Activated T-helper 1 cell treated with anti-CD3 and anti-CD28 coated beads, Interleukin-12 subunit alpha, Interleukin-12 subunit beta, Interleukin-2, Interleukin-4 antibody, amounts not matched to agents 30 ng/mL and 10 ng/mL and 1 ng/mL, durations not matched to agents 14 hours and 24 hours and 36 hours (primary cell): ENCODE measurements at regions of chr15 and their contacts with region 1.

Region 1: DNA sequence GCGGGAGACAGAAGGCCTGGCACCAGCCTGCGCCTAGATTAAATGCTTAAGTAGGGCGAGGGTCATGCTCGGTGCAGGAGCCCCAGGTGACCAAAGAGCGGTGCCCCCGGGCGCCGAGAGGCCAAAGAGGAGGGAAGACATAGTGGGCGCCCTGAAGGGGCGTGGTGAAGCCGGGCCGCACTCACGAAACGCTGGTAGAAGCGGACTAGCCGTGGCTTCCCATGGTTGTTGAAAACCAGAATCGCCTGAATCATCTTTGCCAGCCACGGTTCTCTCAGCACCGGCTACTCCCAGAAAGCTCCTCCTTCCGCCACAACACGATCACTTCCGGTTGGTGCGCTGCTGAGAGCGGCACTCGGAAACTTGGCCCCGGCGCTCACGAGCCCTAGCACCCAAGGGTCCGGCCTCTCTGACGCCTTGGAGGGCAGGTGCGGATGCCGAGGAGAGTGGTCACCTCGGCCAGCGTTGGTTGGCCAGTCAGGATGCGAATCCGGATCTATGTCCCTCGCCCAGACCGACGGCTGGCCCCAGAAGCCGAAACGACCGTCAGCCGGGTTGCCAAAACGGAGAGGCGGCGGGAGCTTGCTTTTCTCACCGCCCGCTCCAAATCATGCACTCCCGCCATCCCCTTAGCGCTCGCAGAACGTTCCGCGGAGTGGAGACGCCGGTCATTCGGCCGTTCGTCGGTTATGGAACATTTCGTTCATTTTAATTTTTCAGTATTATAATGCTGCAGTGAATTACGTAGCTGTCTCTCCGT is at the start of gene AP3S2:
- DNase-seq: peak; percentile 87
- H3K4me3 Mint-ChIP-seq: peak within 1 kb of the TSS; percentile 97
- H3K27ac Mint-ChIP-seq: peak within 1 kb of the TSS; percentile 94
- H3K4me1 Mint-ChIP-seq: peaks cover 36% of the 10 kb centered on the region
- H3K27me3 Mint-ChIP-seq: no peaks in the 10 kb centered on the region
- total RNA-seq, gene AP3S2: 21.4 and 24.7 TPM in 2 replicates

Region 2: DNA sequence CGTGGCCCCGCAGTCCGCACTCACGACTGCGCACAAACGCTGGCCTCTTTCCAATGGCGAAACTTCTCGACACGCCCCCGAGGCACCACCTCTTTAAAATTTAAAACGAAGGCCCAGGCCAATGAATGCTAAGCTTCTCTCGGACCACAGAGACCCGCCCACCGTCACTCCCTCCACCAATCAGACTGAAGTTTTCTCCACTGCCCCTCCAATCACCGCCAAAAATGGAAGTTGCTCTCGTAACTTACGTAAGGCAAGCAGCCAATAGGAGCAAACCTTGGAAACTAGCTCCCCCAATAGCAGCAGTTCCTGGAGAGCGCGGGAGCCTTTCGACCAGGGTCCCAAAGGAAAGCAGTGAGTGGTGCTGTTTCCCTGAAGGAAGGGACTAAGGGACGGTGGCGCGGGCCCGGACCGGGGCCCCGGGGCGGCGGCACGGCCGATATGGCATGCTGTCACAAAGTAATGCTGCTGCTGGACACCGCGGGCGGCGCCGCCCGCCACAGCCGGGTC is 318.7 kb before region 1 on chr15 and contains the start of gene TICRR:
- intact Hi-C with region 1: loop called (anchors 5 kb)
- DNase-seq: peak; percentile 97
- H3K4me3 Mint-ChIP-seq: peak within 1 kb of the TSS; percentile 94
- H3K27ac Mint-ChIP-seq: peak within 1 kb of the TSS; percentile 91
- H3K4me1 Mint-ChIP-seq: peaks cover 30% of the 10 kb centered on the region
- H3K27me3 Mint-ChIP-seq: peaks cover 16% of the 10 kb centered on the region
- total RNA-seq, gene TICRR: 17.6 and 19.2 TPM in 2 replicates

Region 3: DNA sequence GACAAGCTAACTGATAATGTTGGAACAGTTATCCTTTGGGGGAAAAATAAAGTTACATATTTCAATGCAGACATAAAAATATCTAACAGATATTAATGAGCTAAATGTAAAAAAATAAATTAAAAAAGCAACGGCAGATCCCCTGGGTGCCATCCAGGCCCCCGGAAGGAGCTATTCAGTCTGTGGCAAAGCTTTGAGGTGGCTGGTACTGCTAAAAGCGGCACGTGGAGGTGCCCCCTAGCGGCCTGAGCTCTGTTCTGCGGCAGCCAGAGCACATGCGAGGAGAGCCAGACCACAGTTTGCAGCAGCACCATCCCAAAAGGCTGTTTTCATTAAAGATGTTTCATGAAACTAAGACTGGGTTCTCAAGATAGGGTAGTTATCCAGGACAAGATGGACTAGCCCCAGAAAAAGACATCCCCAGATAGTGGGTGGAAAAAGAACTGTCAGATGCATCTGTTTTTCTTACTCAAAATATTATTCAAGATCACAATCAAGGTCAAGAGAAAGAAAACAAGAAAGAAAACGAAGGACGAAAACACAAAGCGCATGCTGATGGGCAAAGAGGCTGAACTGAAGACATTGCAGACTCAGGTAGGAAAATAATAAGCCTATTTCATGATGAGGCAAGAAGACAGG is 18.8 kb before region 1 on chr15:
- intact Hi-C with region 1: loop called (anchors 2 kb)
- DNase-seq: peak; percentile 66
- H3K4me3 Mint-ChIP-seq: no peak overlapping the region
- H3K27ac Mint-ChIP-seq: no peak overlapping the region
- H3K4me1 Mint-ChIP-seq: peaks cover 5% of the 10 kb centered on the region
- H3K27me3 Mint-ChIP-seq: no peaks in the 10 kb centered on the region

Region 4: GRCh38 chr15:90059208-90059985 is 165.5 kb after region 1 on chr15:
- intact Hi-C with region 1: loop called (anchors 5 kb)
- DNase-seq: peak; percentile 69
- H3K4me3 Mint-ChIP-seq: peak overlapping the region; percentile 35
- H3K27ac Mint-ChIP-seq: peak overlapping the region; percentile 85
- H3K4me1 Mint-ChIP-seq: peaks cover 25% of the 10 kb centered on the region
- H3K27me3 Mint-ChIP-seq: no peaks in the 10 kb centered on the region

Region 5: DNA sequence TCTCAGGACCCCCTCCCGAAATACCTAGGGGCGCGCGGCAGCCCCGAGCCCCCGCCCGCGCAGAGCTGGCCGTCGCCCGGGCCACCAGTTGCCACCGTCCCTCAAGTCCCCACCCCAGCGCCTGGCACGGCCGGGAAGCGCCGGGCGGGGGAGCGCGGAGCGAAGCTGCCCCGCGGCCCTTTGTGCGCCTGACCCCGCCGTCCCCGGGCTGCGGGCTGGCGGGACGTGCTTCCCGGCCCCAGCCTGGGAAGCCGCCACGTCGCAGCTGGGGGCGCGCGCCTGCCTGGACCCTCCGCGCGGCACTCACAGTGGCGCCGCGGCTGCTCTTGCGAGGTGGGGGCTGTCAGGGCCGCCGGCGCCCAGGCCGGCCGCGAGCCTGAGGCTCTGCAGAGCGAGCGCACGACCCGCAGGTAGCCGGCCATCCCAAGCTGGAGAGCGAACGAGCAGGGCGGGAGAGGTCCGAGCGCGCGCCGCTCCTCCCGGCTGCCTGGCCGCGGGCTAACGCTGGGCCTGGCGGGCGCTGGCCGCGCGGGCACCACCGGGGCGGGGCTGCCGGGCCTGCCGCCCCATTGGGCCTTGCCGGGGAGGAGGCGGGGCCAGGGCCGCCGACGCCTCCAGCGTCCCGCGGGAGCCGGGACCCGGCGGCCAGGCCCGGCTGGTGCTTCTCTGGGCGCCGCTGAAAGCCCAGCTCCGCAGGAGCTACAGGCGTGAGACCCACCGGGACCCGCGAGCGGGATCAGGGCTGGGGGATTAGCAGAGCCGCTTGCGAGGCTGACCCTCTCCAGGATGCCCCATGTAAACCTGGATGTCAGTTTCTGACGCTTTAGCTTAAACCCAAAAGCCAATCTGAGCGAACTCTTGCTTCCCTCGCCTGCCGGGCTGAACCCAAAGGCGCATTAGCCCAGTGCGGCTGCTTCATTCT is 208.4 kb after region 1 on chr15 and contains the start of gene IDH2:
- intact Hi-C with region 1: loop called (anchors 1 kb)
- DNase-seq: peak; percentile 72
- H3K4me3 Mint-ChIP-seq: peak within 1 kb of the TSS; percentile 89
- H3K27ac Mint-ChIP-seq: peak within 1 kb of the TSS; percentile 94
- H3K4me1 Mint-ChIP-seq: peaks cover 52% of the 10 kb centered on the region
- H3K27me3 Mint-ChIP-seq: peaks cover 12% of the 10 kb centered on the region
- total RNA-seq, gene IDH2: 94.1 and 96.3 TPM in 2 replicates

Region 6: DNA sequence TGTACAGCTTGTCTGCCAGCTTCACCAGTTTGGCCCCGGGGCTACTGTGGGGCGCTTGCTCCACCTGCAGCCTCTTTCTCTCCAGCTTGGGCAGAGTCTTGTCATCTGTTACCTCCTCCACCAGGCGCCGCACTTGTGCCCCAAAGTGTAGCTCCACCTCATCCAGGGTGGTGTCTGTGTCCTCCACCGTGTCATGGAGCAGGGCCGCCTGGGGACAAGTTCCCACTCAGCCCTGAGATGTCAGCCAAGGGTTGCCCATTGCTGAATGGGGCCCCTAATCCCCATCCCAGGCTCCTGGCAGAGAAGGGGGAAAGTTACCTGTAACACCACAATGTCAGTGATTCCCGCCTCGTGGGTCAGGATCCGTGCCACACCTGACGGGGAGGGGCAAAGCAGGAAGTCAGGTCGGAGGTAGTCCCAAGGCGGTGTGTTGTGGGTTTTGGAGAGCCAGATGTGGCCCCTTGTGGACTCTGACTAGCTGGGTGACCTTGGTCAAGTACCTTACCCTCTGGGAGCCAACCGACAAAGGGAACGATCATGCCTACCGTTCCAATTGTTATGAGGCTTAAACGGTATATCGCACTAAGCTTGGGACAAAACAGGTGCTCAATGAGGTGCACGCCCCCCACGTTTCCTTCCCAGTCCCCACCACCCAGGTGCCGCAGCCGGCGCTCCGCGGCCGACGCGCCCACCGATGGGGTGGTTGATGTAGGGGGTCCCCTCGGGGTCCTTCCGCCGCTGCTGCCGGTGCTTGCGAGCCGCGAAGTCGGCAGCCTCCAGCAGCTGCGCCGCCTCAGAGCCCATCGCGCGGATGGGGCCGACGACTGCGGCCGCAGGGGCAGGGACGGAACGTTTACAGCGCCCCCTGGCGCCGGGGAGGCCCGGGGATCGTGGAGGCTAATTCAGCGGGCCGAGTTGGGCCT is 1038.1 kb after region 1 on chr15 and contains the start of gene HDDC3:
- intact Hi-C with region 1: loop called (anchors 10 kb)
- DNase-seq: peak; percentile 87
- H3K4me3 Mint-ChIP-seq: peak within 1 kb of the TSS; percentile 99
- H3K27ac Mint-ChIP-seq: peak within 1 kb of the TSS; percentile 99
- H3K4me1 Mint-ChIP-seq: peaks cover 69% of the 10 kb centered on the region
- H3K27me3 Mint-ChIP-seq: no peaks in the 10 kb centered on the region
- total RNA-seq, gene HDDC3: 38.8 and 39.0 TPM in 2 replicates